SK-N-SH (cell line): ENCODE measurements at regions of chr7 and their contacts with region 1.

Region 1: DNA sequence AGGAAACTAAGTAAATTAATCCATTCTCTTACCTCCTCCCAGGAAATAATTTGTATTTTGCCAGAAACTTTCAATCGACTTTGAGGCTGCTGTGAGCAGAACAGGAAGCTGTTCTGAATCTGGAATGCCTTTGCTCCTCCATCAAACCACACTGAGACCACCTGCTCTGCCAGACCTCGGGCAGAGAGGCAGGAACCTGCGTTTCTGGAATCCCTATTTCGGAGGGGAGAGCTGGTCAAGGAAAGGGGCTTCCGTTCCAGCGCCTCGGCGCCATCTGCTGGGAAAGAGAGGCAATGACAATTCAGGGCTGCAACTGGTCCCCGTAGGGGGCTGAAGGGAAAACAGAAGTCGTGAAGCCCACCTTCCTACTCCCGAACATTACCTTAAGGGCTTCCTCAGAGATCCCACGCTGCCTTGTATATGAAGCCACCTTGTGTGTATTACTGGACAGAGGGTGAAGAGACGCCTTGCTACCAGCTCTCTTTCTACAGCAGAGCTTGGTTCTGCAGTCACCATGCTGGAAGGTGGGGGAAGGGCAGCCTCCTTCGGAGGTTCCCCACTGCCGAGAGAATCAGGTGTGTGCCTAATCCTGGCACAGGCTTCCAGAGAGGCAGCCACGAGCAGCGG is 31.2 kb downstream of the ZNF467 start:
- DNase-seq: peak; percentile 92
- H3K4me3 ChIP-seq: peak overlapping the region; percentile 45 to 56
- H3K27ac ChIP-seq: peak overlapping the region in 1 of 2 experiments; percentile 17; a peak in 2 of 4 replicates
- H3K4me1 ChIP-seq: peaks cover 0 to 11% of the 10 kb centered on the region in 2 experiments; a peak in 1 of 4 replicates
- H3K27me3 ChIP-seq: peaks cover 30% of the 10 kb centered on the region
- CTCF ChIP-seq: peak; percentile 98
- EP300 ChIP-seq: no peak
- RAD21 ChIP-seq: peak; percentile 90

Region 2: DNA sequence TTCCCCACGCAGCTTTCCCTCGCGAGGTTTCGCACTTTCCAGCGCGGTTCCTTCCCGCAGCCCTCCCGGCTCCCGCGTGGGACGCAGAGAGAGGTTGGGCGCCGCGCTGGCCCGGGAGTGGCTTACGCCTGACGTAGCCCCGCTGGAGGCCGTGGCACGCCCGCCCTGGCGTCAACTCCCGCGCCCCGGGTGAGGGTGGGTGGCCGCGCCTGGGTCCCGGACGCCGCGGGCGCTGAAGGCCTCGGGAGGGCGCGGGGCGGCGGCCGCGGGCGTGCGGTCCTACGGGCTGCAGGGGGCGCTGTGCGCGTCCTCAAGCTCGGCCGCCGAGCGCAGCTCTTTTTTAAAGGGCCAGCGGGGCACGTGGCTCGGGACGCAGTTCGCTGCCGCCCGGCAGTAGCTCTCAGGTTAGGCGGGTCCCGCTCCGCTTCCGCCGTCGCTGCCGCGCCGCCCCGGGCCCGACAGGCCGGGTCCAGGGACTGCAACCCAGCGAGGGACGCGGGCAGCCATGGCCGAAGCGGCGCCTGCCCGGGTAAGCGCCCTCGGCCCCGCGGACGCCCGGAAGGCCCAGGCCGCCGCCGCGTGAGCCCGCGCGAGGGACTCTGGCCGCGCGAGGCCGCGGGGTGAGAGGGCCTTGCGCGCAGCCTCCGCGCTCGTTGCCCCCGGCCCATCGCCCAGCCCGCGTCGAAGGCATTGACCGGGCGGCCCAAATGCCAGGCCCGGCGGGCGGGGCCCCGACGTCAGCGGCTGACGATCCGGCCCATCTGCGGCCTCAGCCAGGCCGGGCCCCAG is 480.2 kb before region 1 on chr7 and contains the start of gene ZNF783:
- CTCF ChIA-PET with region 1: interaction called, 15 read pairs
- POLR2A ChIA-PET with region 1: no interaction called
- DNase-seq: peak; percentile 98
- H3K4me3 ChIP-seq: peak within 1 kb of the TSS; percentile 53 to 62
- H3K27ac ChIP-seq: peak within 1 kb of the TSS; percentile 44 to 55
- H3K4me1 ChIP-seq: peaks cover 9 to 12% of the 10 kb centered on the region in 2 experiments; a peak in 2 of 4 replicates
- H3K27me3 ChIP-seq: no peaks in the 10 kb centered on the region
- CTCF ChIP-seq: peak; percentile 76
- EP300 ChIP-seq: peak in 1 of 2 experiments; percentile 31; a peak in 1 of 4 replicates
- RAD21 ChIP-seq: peak; percentile 57
- polyA plus RNA-seq, gene ZNF783: 12.5 and 16.4 TPM in 2 replicates

Region 3: GRCh38 chr7:149644778-149645177 is 97.4 kb before region 1 on chr7:
- CTCF ChIA-PET with region 1: interaction called, 12 read pairs
- POLR2A ChIA-PET with region 1: no interaction called
- DNase-seq: no peak
- H3K4me3 ChIP-seq: no peak overlapping the region
- H3K27ac ChIP-seq: no peak overlapping the region
- H3K4me1 ChIP-seq: no peaks in the 10 kb centered on the region; a peak in 1 of 4 replicates
- H3K27me3 ChIP-seq: peaks cover 15% of the 10 kb centered on the region; the same call in 1 of the 2 replicates
- CTCF ChIP-seq: no peak
- EP300 ChIP-seq: no peak
- RAD21 ChIP-seq: no peak

Region 4: GRCh38 chr7:149686002-149686401 is 56.2 kb before region 1 on chr7:
- CTCF ChIA-PET with region 1: interaction called, 11 read pairs
- POLR2A ChIA-PET with region 1: no interaction called
- DNase-seq: no peak
- H3K4me3 ChIP-seq: no peak overlapping the region
- H3K27ac ChIP-seq: no peak overlapping the region
- H3K4me1 ChIP-seq: no peaks in the 10 kb centered on the region; a peak in 1 of 4 replicates
- H3K27me3 ChIP-seq: no peaks in the 10 kb centered on the region; the same call in 1 of the 2 replicates
- CTCF ChIP-seq: no peak
- EP300 ChIP-seq: no peak
- RAD21 ChIP-seq: no peak

Region 5: GRCh38 chr7:149729983-149730801 is 12.0 kb before region 1 on chr7:
- CTCF ChIA-PET with region 1: interaction called, 43 read pairs
- POLR2A ChIA-PET with region 1: no interaction called
- DNase-seq: peak; percentile 50
- H3K4me3 ChIP-seq: no peak overlapping the region
- H3K27ac ChIP-seq: no peak overlapping the region
- H3K4me1 ChIP-seq: peaks cover 0 to 2% of the 10 kb centered on the region in 2 experiments; a peak in 1 of 4 replicates
- H3K27me3 ChIP-seq: no peaks in the 10 kb centered on the region
- CTCF ChIP-seq: no peak
- EP300 ChIP-seq: no peak
- RAD21 ChIP-seq: peak; percentile 32

Region 6: GRCh38 chr7:149771721-149772240 is 29.6 kb after region 1 on chr7:
- CTCF ChIA-PET with region 1: interaction called, 51 read pairs
- POLR2A ChIA-PET with region 1: no interaction called
- DNase-seq: peak; percentile 99
- H3K4me3 ChIP-seq: peak overlapping the region; percentile 61 to 65
- H3K27ac ChIP-seq: peak overlapping the region in 1 of 2 experiments; percentile 74; a peak in 1 of 4 replicates
- H3K4me1 ChIP-seq: peaks cover 4 to 33% of the 10 kb centered on the region in 2 experiments; a peak in 1 of 4 replicates
- H3K27me3 ChIP-seq: peaks cover 21% of the 10 kb centered on the region
- CTCF ChIP-seq: no peak
- EP300 ChIP-seq: no peak
- RAD21 ChIP-seq: no peak

Region 7: DNA sequence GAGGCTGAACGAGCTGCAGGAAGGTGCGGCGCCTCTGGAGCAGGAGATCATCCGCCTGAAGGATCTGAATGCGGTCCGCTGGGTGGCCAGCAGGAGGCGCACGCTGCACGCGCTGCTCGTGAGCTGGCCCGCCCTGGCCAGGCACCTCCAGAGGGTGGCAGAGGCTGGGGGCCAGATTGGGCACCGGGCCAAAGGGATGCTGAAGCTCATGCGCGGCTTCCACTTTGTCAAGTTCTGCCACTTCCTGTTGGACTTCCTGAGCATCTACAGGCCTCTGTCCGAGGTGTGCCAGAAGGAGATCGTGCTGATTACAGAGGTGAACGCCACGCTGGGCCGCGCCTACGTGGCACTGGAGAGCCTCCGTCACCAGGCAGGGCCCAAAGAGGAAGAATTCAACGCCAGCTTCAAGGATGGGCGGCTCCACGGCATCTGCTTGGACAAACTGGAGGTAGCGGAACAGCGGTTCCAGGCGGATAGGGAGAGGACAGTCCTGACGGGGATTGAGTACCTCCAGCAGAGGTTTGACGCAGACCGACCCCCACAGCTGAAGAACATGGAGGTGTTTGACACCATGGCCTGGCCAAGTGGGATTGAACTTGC is 119.4 kb after region 1 on chr7:
- CTCF ChIA-PET with region 1: no interaction called
- POLR2A ChIA-PET with region 1: no interaction called
- DNase-seq: peak; percentile 65
- H3K4me3 ChIP-seq: no peak overlapping the region
- H3K27ac ChIP-seq: no peak overlapping the region
- H3K4me1 ChIP-seq: no peaks in the 10 kb centered on the region
- H3K27me3 ChIP-seq: no peaks in the 10 kb centered on the region
- CTCF ChIP-seq: peak; percentile 37
- EP300 ChIP-seq: no peak
- RAD21 ChIP-seq: no peak